ENCODE measurements at regions of chr4 and their contacts with region 1.

Region 1: GRCh38 chr4:25367004-25367621 is 9.9 kb upstream of the ANAPC4 start:
- DNase-seq: peak in 1 of 4 donors; percentile 32
- ATAC-seq: peak; percentile 44
- H3K4me3 ChIP-seq: no peak overlapping the region
- H3K27ac ChIP-seq: no peak overlapping the region
- H3K4me1 ChIP-seq: no peaks in the 10 kb centered on the region
- H3K27me3 ChIP-seq: no peaks in the 10 kb centered on the region
- CTCF ChIP-seq: peak; percentile 38 to 48

Region 2: GRCh38 chr4:25123236-25123635 is 243.9 kb before region 1 on chr4:
- intact Hi-C with region 1: no loop called
- DNase-seq: no peak
- ATAC-seq: no peak
- H3K4me3 ChIP-seq: no peak overlapping the region
- H3K27ac ChIP-seq: no peak overlapping the region
- H3K4me1 ChIP-seq: no peaks in the 10 kb centered on the region
- H3K27me3 ChIP-seq: no peaks in the 10 kb centered on the region
- CTCF ChIP-seq: no peak

Region 3: DNA sequence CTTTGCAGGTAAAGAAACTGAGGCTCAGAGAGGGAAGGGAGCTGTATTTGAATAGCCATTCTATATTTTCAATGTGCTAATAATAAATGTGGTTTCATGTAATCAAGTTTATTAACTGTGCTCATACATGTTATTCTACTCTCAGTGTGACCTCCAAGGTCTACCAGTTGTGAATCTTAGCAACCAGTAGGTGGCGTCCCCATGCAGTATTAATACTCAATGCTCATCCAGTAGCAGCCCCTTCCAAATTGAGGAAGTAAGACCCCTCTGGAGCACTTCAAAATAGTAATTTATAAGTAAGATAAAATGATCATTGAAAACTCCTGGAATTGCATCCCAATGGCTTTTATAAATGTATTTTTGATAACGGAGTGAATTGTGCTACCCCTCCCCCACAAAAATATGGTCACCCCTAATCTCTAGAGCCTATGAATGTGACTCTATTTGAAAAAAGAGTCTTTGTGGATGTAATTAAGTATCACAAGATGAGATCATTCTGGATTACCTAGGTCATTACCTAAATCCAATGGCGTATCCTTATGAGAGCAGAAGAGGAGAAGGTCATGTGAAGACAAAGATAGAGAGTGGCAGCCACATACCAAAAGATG is 186.5 kb before region 1 on chr4:
- intact Hi-C with region 1: loop called in 1 of 2 experiments (anchors 10 kb)
- DNase-seq: peak in 1 of 4 donors; percentile 35
- ATAC-seq: peak; percentile 92
- H3K4me3 ChIP-seq: no peak overlapping the region
- H3K27ac ChIP-seq: no peak overlapping the region
- H3K4me1 ChIP-seq: peaks cover 0 to 3% of the 10 kb centered on the region in 2 donors
- H3K27me3 ChIP-seq: no peaks in the 10 kb centered on the region
- CTCF ChIP-seq: peak; percentile 57 to 60

Measured in left lung (tissue), 14 donors.